ENCODE measurements at regions of chr1 and their contacts with region 1.

Region 1: GRCh38 chr1:202192770-202193613 is 607 bp upstream of the LGR6 start:
- DNase-seq: peak; percentile 89
- ATAC-seq: peak; percentile 68
- H3K4me3 Mint-ChIP-seq: peak overlapping the region; percentile 77
- H3K27ac Mint-ChIP-seq: no peak overlapping the region
- H3K4me1 Mint-ChIP-seq: peaks cover 3% of the 10 kb centered on the region
- H3K27me3 Mint-ChIP-seq: peaks cover 38% of the 10 kb centered on the region
- CTCF ChIP-seq: peak; percentile 80

Region 2: DNA sequence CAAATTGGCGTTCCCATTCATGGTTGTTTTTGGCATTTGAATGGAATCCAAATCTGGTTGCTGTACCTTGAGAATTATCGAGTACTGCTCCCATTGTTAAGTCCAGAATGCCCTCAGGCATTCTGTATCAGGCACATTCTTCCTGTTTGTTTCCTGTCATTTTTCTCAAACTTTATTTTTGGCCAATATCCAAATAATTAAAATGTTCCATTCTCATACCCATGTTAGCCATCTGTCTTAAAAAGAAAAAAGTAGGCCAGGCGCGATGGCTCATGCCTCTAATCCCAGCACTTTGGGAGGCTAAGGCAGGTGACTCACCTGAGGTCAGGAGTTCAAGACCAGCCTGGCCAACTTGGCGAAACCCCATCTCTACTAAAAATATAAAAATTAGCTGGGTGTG is 333.6 kb before region 1 on chr1:
- CTCF ChIA-PET with region 1: no interaction called
- POLR2A ChIA-PET with region 1: no interaction called
- DNase-seq: no peak
- ATAC-seq: no peak
- H3K4me3 Mint-ChIP-seq: no peak overlapping the region
- H3K27ac Mint-ChIP-seq: no peak overlapping the region
- H3K4me1 Mint-ChIP-seq: no peaks in the 10 kb centered on the region
- H3K27me3 Mint-ChIP-seq: no peaks in the 10 kb centered on the region; the same call in 1 of the 2 replicates
- CTCF ChIP-seq: no peak

Region 3: GRCh38 chr1:201945157-201945556 is 247.8 kb before region 1 on chr1:
- CTCF ChIA-PET with region 1: no interaction called
- POLR2A ChIA-PET with region 1: no interaction called
- DNase-seq: peak; percentile 28
- ATAC-seq: no peak
- H3K4me3 Mint-ChIP-seq: peak overlapping the region; percentile 82
- H3K27ac Mint-ChIP-seq: no peak overlapping the region
- H3K4me1 Mint-ChIP-seq: peaks cover 41% of the 10 kb centered on the region
- H3K27me3 Mint-ChIP-seq: peaks cover 32% of the 10 kb centered on the region
- CTCF ChIP-seq: no peak; the same call in 1 of the 2 replicates

Region 4: DNA sequence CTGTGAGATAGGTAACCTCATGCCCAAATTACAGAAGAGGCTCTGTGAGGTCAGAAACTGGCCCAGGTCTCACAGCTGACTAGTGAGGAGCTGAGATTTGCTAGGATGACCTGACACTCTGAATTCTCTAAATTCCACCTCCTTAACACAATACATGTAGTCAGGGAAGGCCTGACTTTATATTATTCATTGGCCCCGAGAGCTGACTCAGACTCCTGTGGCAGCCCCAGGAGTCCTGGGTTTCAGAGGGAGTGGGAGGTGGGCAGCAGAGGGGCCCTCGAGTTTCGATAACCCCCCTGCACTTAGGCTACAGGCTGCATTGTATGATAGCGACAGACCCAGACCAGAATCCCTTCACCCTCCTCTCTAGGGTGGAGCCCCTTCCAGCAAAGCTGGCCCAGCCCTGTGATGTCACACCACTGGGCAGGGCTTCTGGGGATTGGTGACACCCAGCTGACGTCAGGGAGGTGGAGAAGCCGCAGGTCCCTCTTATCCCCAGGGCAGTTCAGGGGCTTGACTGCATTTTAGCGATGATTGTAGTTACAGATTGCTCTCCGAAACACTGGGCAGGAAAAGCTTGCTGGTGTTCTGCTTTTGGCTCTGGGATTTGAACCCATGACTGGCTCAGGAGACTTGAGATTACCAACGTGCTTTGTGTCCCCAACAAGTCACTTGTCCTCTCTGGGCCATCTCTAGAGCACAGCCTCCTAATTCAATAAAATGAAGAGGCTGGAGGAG is 87.3 kb before region 1 on chr1:
- CTCF ChIA-PET with region 1: no interaction called
- POLR2A ChIA-PET with region 1: no interaction called
- DNase-seq: peak; percentile 83
- ATAC-seq: peak; percentile 90
- H3K4me3 Mint-ChIP-seq: peak overlapping the region; percentile 28
- H3K27ac Mint-ChIP-seq: peak overlapping the region; percentile 94
- H3K4me1 Mint-ChIP-seq: peaks cover 42% of the 10 kb centered on the region
- H3K27me3 Mint-ChIP-seq: no peaks in the 10 kb centered on the region
- CTCF ChIP-seq: no peak

Region 5: GRCh38 chr1:202176949-202177927 is 15.8 kb before region 1 on chr1:
- CTCF ChIA-PET with region 1: interaction called, 12 read pairs
- POLR2A ChIA-PET with region 1: no interaction called
- DNase-seq: no peak
- ATAC-seq: peak; percentile 85
- H3K4me3 Mint-ChIP-seq: no peak overlapping the region
- H3K27ac Mint-ChIP-seq: no peak overlapping the region
- H3K4me1 Mint-ChIP-seq: no peaks in the 10 kb centered on the region
- H3K27me3 Mint-ChIP-seq: no peaks in the 10 kb centered on the region
- CTCF ChIP-seq: no peak

Region 6: GRCh38 chr1:202274611-202275010 is 81.6 kb after region 1 on chr1:
- CTCF ChIA-PET with region 1: interaction called, 34 read pairs
- POLR2A ChIA-PET with region 1: no interaction called
- DNase-seq: peak; percentile 42
- ATAC-seq: peak; percentile 55
- H3K4me3 Mint-ChIP-seq: no peak overlapping the region
- H3K27ac Mint-ChIP-seq: no peak overlapping the region
- H3K4me1 Mint-ChIP-seq: no peaks in the 10 kb centered on the region
- H3K27me3 Mint-ChIP-seq: no peaks in the 10 kb centered on the region; the same call in none of the 2 replicates
- CTCF ChIP-seq: no peak

Region 7: GRCh38 chr1:202315576-202316168 is 122.7 kb after region 1 on chr1:
- CTCF ChIA-PET with region 1: interaction called, 49 read pairs
- POLR2A ChIA-PET with region 1: no interaction called
- DNase-seq: peak; percentile 90
- ATAC-seq: peak; percentile 97
- H3K4me3 Mint-ChIP-seq: no peak overlapping the region
- H3K27ac Mint-ChIP-seq: no peak overlapping the region
- H3K4me1 Mint-ChIP-seq: peaks cover 15% of the 10 kb centered on the region
- H3K27me3 Mint-ChIP-seq: no peaks in the 10 kb centered on the region
- CTCF ChIP-seq: peak; percentile 74; the same call in 1 of the 2 replicates

Region 8: DNA sequence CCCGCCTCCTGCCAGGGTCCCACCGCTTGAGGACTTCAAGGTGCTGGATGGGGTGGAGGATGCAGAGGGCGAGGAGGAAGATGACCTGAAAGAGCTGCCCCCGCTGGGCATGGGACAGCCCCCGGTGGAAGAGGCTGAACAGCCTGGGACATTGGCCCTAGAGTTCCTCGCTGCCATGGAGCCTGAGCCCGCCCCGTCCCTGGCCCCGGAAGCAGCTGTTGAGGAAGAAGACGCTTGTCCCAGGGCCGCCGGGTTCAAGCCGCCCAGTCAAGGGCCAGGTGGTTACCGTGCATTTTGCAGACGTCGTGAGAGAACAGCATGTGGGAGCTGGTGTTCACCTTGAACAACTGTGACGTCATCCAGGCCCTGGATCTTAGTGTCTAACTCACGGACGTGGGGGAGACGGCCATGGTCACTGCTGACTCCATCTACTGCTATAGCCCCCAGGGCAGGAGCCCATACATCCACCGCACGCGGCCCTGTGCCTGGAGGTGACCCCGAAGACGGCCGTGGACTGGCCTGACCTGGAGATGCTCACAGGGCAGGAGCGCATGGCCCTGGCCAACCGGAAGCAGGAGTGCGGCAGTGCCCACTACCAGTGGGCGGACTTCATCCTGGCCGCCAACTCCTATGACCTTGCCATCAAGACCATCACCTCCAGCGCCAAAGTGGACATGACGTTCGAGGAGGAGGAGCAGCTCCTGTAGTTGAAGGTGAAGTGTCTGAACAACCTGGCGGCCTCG is 245.6 kb after region 1 on chr1:
- CTCF ChIA-PET with region 1: no interaction called
- POLR2A ChIA-PET with region 1: no interaction called
- DNase-seq: no peak
- ATAC-seq: no peak
- H3K4me3 Mint-ChIP-seq: no peak overlapping the region
- H3K27ac Mint-ChIP-seq: no peak overlapping the region
- H3K4me1 Mint-ChIP-seq: no peaks in the 10 kb centered on the region
- H3K27me3 Mint-ChIP-seq: no peaks in the 10 kb centered on the region
- CTCF ChIP-seq: no peak

Region 9: DNA sequence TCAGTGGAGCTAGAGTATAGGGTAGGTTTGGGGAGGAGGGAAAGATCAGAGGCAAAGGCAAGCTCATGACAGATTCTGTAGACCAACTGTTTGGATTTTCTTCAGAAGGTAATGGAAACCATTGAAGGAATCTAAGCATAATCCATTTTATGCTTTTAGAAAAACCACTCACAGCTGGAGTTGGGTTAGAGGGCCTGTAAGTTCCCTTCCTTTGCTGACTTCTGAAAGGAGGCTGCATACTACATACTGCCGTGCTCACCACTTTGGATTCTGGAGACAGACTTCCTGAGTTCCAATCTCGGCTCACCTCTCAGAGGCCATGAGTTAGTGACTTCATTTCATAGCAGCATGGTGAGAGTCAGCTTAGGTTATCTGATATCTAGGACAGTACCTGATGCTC is 523.7 kb after region 1 on chr1:
- CTCF ChIA-PET with region 1: interaction called, 20 read pairs
- POLR2A ChIA-PET with region 1: no interaction called
- DNase-seq: no peak
- ATAC-seq: no peak
- H3K4me3 Mint-ChIP-seq: no peak overlapping the region
- H3K27ac Mint-ChIP-seq: no peak overlapping the region
- H3K4me1 Mint-ChIP-seq: peaks cover 27% of the 10 kb centered on the region
- H3K27me3 Mint-ChIP-seq: peaks cover 3% of the 10 kb centered on the region; the same call in 1 of the 2 replicates
- CTCF ChIP-seq: no peak

Measured in WTC11 (cell line).